IMR-90 (cell line): ENCODE measurements at regions of chr4 and their contacts with region 1.

Region 1: GRCh38 chr4:77156533-77156911 is 485 bp upstream of the CCNG2 start:
- DNase-seq: peak; percentile 99
- ATAC-seq: peak; percentile 86
- H3K4me3 ChIP-seq: peak overlapping the region; percentile 99
- H3K27ac ChIP-seq: peak overlapping the region; percentile 38
- H3K4me1 ChIP-seq: 0 out of 2 replicates have a peak, but pooled peaks cover 2% of the 10 kb centered on the region
- H3K27me3 ChIP-seq: peaks cover 3% of the 10 kb centered on the region; the same call in 1 of the 2 replicates
- CTCF ChIP-seq: no peak
- POLR2A ChIP-seq: no peak
- RAD21 ChIP-seq: no peak

Region 2: DNA sequence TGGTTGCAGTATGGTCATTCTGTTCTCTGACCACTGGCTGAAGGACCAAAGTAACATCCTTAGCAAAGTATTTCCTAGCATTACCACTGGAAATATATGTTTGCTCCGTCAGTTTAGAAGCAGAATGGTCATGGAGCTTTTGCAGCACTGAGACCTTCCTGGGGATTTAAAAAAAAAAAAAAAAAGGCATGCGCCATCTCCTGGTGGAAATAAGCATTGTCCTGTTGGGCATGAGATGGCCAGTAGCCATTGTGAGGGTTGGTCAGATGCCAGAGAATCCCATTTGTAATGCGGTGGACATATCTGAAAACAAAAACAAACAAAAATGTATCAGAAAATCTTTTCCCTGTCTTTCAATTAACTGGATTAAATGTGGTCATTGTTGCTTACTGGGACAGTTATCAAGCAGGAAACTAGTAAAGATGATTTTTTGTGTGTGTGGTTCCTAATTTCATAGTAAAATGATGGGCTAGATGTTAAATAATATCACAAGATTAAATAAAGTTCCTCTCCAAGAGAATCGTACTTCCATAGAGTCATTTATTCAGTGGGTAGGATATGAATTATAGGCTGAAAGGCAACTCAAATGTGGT is 398.1 kb before region 1 on chr4:
- CTCF ChIA-PET with region 1: no interaction called
- POLR2A ChIA-PET with region 1: no interaction called
- dilution Hi-C with region 1: no loop called
- in situ Hi-C with region 1: loop called (anchors 25 kb)
- intact Hi-C with region 1: loop called (anchors 1 kb)
- DNase-seq: peak; percentile 81
- ATAC-seq: no peak
- H3K4me3 ChIP-seq: no peak overlapping the region
- H3K27ac ChIP-seq: peak overlapping the region; percentile 77; the same call in 1 of the 2 replicates
- H3K4me1 ChIP-seq: peaks cover 40% of the 10 kb centered on the region
- H3K27me3 ChIP-seq: no peaks in the 10 kb centered on the region
- CTCF ChIP-seq: peak; percentile 77
- POLR2A ChIP-seq: no peak
- RAD21 ChIP-seq: peak; percentile 67

Region 3: DNA sequence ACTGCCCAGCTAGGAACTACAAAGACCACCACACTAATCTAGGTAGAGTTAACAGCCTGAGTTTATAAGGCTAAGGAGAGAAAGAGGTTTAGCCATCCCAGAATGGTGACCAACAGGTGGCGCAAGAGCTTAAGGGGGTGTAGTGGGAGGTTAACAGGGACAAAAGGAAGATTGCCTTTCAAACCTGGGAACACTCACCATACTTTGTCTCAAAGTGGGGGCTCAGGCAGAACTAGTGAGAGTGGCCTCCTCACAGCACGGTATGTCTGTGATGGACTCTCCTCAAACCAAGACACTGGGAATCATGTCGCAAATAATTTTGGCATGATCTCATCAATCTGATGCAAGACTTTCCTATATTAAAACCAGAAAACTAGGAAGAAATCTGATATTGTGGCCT is 104.2 kb before region 1 on chr4:
- CTCF ChIA-PET with region 1: no interaction called
- POLR2A ChIA-PET with region 1: no interaction called
- dilution Hi-C with region 1: no loop called
- in situ Hi-C with region 1: no loop called
- intact Hi-C with region 1: loop called (anchors 5 kb)
- DNase-seq: peak; percentile 69
- ATAC-seq: peak; percentile 38
- H3K4me3 ChIP-seq: no peak overlapping the region
- H3K27ac ChIP-seq: peak overlapping the region; percentile 39; the same call in 1 of the 2 replicates
- H3K4me1 ChIP-seq: peaks cover 2% of the 10 kb centered on the region
- H3K27me3 ChIP-seq: no peaks in the 10 kb centered on the region
- CTCF ChIP-seq: peak; percentile 33
- POLR2A ChIP-seq: no peak; the same call in 1 of the 2 replicates
- RAD21 ChIP-seq: 0 out of 2 replicates have a peak, but pooled peaks have one; percentile 16

Region 4: DNA sequence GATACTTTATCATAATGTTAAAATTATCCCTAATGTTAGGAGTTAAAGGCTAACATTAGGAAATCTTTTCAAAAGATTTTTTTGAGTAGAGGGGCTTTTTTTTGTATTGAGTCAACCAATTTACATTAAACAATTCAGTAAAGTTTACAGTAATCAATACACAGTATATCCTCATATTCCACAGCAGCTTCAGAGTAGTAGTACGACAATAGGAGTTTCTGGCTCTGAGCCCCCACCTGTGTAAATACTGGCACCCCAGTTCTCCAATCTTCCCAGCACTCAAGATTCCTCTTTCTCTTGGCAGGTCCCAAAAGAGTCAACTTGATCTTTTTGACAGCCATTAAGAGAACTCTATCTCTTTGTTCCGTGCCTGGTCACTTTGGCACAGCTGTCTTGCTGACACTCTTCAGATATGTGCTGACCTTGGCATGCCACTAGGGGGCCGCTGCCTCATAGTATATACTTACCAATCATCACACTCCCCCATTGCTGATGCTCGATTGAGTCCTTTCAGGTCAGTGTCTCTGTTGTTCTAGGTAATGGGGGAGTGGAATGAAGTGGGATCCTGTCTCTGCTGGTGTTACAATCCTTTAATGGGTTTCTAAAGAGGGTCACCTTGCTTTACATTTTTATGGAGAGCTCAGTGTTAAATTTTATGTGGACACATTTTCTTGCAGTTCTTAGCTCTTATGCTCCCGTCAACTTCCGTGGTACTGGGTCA is 61.3 kb before region 1 on chr4:
- CTCF ChIA-PET with region 1: interaction called, 10 read pairs
- POLR2A ChIA-PET with region 1: no interaction called
- dilution Hi-C with region 1: no loop called
- in situ Hi-C with region 1: no loop called
- intact Hi-C with region 1: loop called (anchors 5 kb)
- DNase-seq: peak; percentile 31
- ATAC-seq: peak; percentile 96
- H3K4me3 ChIP-seq: no peak overlapping the region
- H3K27ac ChIP-seq: no peak overlapping the region
- H3K4me1 ChIP-seq: no peaks in the 10 kb centered on the region
- H3K27me3 ChIP-seq: no peaks in the 10 kb centered on the region
- CTCF ChIP-seq: peak; percentile 53
- POLR2A ChIP-seq: no peak
- RAD21 ChIP-seq: peak; percentile 34